Heart right ventricle (tissue), 16 donors: ENCODE measurements at regions of chr3 and their contacts with region 1.

Region 1: GRCh38 chr3:174891524-174892203 is 32.5 kb downstream of the NAALADL2 start:
- DNase-seq: no peak
- ATAC-seq: no peak
- H3K4me3 ChIP-seq: no peak overlapping the region
- H3K27ac ChIP-seq: no peak overlapping the region
- H3K4me1 ChIP-seq: no peaks in the 10 kb centered on the region
- H3K27me3 ChIP-seq: no peaks in the 10 kb centered on the region
- CTCF ChIP-seq: peak in 3 of 9 donors; percentile 4 to 26 (median 19)

Region 2: GRCh38 chr3:174397848-174398247 is 493.8 kb before region 1 on chr3:
- intact Hi-C with region 1: loop called in 1 of 10 experiments (anchors 10 kb)
- DNase-seq: no peak
- ATAC-seq: no peak
- H3K4me3 ChIP-seq: no peak overlapping the region
- H3K27ac ChIP-seq: no peak overlapping the region
- H3K4me1 ChIP-seq: no peaks in the 10 kb centered on the region
- H3K27me3 ChIP-seq: no peaks in the 10 kb centered on the region
- CTCF ChIP-seq: peak in 7 of 9 donors; percentile 48 to 66 (median 56)

Region 3: GRCh38 chr3:174775587-174775986 is 116.1 kb before region 1 on chr3:
- intact Hi-C with region 1: no loop called
- DNase-seq: peak in 1 of 2 donors; percentile 25
- ATAC-seq: peak; percentile 52 to 99 (median 94)
- H3K4me3 ChIP-seq: no peak overlapping the region
- H3K27ac ChIP-seq: peak overlapping the region in 6 of 10 donors; percentile 9 to 74 (median 50)
- H3K4me1 ChIP-seq: peaks cover 0 to 12% (median 0%) of the 10 kb centered on the region in 9 donors
- H3K27me3 ChIP-seq: no peaks in the 10 kb centered on the region
- CTCF ChIP-seq: no peak

Region 4: GRCh38 chr3:175121225-175121624 is 229.6 kb after region 1 on chr3:
- intact Hi-C with region 1: no loop called
- DNase-seq: no peak
- ATAC-seq: no peak
- H3K4me3 ChIP-seq: no peak overlapping the region
- H3K27ac ChIP-seq: no peak overlapping the region
- H3K4me1 ChIP-seq: no peaks in the 10 kb centered on the region
- H3K27me3 ChIP-seq: no peaks in the 10 kb centered on the region
- CTCF ChIP-seq: no peak

Region 5: DNA sequence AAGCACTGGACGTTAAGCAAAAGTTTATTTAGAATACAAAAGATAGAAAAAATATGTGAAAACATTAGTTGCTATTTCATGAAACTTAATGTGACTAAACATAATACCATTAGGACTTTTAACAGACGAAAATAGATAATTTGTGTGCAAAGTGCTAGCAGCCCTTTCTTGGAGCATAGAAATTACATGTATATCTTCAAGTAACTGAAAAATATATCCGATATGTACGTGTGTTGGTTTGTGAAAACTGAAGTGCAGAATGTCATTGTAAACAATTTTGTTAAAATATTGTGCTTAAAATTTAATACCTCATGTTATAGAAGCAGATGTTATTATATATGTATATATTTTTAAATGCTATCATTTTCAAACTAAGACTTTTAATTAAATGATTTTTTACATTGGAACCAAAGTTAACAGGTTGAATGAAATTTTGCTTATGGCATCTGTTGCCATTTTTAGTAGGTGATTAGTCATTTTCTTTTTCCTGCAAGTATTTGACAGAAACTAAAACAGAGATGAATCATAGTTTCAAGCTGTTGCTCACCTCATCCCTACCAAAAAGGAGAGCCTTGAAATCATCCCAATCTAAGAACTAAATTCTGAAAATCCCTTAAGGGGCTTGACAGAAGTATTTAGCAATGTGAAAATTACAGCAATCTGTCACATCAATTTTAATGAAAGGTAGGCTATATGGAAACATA is 302.3 kb after region 1 on chr3:
- intact Hi-C with region 1: no loop called
- DNase-seq: no peak
- ATAC-seq: no peak
- H3K4me3 ChIP-seq: no peak overlapping the region
- H3K27ac ChIP-seq: no peak overlapping the region
- H3K4me1 ChIP-seq: peaks cover 0 to 8% (median 0%) of the 10 kb centered on the region in 9 donors
- H3K27me3 ChIP-seq: no peaks in the 10 kb centered on the region
- CTCF ChIP-seq: no peak

Region 6: GRCh38 chr3:175861916-175862315 is 970.3 kb after region 1 on chr3:
- intact Hi-C with region 1: no loop called
- DNase-seq: no peak
- ATAC-seq: no peak
- H3K4me3 ChIP-seq: no peak overlapping the region
- H3K27ac ChIP-seq: no peak overlapping the region
- H3K4me1 ChIP-seq: no peaks in the 10 kb centered on the region
- H3K27me3 ChIP-seq: no peaks in the 10 kb centered on the region
- CTCF ChIP-seq: no peak